ENCODE measurements at regions of chr10 and their contacts with region 1.

Region 1: DNA sequence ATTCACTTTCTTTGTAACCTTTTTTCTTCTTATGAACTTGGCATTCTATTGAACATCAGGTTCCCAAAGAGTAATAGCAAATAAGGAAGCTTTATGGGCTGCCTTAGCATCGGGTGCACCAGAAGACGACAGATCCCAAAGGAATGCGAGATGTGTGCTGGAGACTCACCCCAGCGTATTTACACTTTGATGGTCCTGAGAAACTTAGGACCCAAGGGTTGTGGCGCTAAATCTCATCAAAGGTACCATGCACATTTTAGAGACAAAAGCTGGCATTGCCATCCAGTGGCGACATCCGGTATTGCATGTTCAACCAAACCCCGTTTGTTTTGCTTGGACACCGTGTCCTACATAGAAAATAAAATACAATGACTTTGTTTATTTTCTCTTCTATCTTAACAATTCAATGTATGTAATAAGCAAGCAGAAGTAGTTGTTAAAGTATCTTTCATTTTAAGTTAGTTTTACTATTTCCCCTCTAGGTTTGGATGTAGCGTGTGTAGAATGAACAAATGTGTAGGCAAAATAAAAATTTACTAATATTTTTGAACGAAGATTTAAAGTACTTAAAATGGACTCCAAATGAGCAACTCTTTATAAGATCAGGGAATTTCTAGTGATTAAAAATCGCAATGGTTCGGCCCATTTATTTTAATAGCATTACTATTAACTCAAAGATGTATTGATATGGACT is 1154.8 kb downstream of the GATA3 start:
- DNase-seq: peak; percentile 24 to 56 (median 35)
- ATAC-seq: peak in 1 of 4 donors; percentile 47
- H3K4me3 ChIP-seq: no peak overlapping the region
- H3K27ac ChIP-seq: no peak overlapping the region
- H3K4me1 ChIP-seq: no peaks in the 10 kb centered on the region
- H3K27me3 ChIP-seq: peaks cover 0 to 10% (median 0%) of the 10 kb centered on the region in 9 donors
- CTCF ChIP-seq: peak; percentile 82 to 95 (median 88)
- POLR2A ChIP-seq: no peak

Region 2: GRCh38 chr10:7866176-7866575 is 1343.1 kb before region 1 on chr10:
- intact Hi-C with region 1: loop called in 5 of 10 experiments (anchors 2 to 5 kb)
- DNase-seq: no peak
- ATAC-seq: no peak
- H3K4me3 ChIP-seq: no peak overlapping the region
- H3K27ac ChIP-seq: no peak overlapping the region
- H3K4me1 ChIP-seq: no peaks in the 10 kb centered on the region
- H3K27me3 ChIP-seq: no peaks in the 10 kb centered on the region
- CTCF ChIP-seq: no peak
- POLR2A ChIP-seq: no peak

Region 3: DNA sequence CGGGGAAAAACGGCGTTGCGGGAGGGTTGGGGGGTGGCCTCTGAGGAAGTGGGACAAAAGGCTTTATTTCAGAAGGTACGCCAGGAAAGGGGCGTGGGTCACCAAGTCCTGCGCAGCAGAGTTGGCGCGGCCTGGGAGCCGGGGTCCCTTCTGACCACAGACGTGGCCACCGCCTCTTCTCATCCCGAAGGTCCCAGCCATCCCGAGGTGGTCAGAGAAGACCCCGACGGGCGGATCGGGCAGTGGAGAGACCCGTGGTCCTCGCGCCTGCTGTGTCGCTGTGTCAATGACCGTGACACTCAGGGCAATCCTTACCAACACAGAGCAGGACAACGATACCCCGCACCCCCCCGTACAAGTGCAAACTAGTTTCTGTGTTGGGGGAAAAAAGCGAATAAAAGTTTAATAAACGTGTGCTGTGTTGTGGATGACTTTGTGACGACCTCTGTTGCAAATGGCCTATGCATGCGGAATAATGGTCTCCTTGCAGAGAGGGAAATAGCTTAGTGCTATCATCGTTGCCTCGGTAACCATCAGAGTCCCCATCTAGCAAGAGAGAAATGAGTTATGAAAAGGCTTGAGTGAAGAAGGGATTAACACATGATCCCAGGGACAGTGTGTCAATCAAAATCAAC is 1174.1 kb before region 1 on chr10:
- intact Hi-C with region 1: loop called in 1 of 10 experiments (anchors 10 kb)
- DNase-seq: no peak
- ATAC-seq: no peak
- H3K4me3 ChIP-seq: peak overlapping the region in 6 of 12 donors; percentile 6 to 26 (median 22)
- H3K27ac ChIP-seq: no peak overlapping the region
- H3K4me1 ChIP-seq: peaks cover 0 to 44% (median 16%) of the 10 kb centered on the region in 12 donors
- H3K27me3 ChIP-seq: peaks cover 56 to 100% (median 87%) of the 10 kb centered on the region in 9 donors
- CTCF ChIP-seq: no peak
- POLR2A ChIP-seq: no peak

Region 4: DNA sequence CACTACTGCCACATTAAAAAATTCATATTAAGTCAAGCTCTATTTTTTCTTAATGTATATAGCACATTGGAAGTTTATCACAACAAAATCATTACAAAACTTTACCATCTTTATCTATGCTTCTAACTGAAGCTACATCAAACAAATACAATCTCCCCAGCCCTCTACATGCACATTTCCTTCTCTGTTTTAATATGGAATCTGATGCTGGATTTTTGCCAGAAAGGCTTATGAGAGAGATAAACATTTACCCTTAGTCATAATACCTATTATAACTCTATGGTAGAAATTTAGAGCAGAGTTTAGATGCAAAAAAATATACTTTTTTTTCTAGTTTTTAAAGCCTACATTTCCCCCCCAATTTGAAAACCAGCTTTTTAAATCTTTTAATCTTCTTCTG is 43.9 kb after region 1 on chr10:
- intact Hi-C with region 1: no loop called
- DNase-seq: no peak
- ATAC-seq: no peak
- H3K4me3 ChIP-seq: no peak overlapping the region
- H3K27ac ChIP-seq: no peak overlapping the region
- H3K4me1 ChIP-seq: no peaks in the 10 kb centered on the region
- H3K27me3 ChIP-seq: peaks cover 0 to 6% (median 0%) of the 10 kb centered on the region in 9 donors
- CTCF ChIP-seq: no peak
- POLR2A ChIP-seq: no peak

Region 5: GRCh38 chr10:9853405-9854355 is 644.4 kb after region 1 on chr10:
- intact Hi-C with region 1: no loop called
- DNase-seq: peak in 2 of 5 donors; percentile 9 to 42
- ATAC-seq: peak; percentile 42 to 90 (median 59)
- H3K4me3 ChIP-seq: peak overlapping the region in 1 of 12 donors; percentile 11
- H3K27ac ChIP-seq: no peak overlapping the region
- H3K4me1 ChIP-seq: peaks cover 0 to 8% (median 0%) of the 10 kb centered on the region in 12 donors
- H3K27me3 ChIP-seq: no peaks in the 10 kb centered on the region
- CTCF ChIP-seq: peak in 5 of 12 donors; percentile 9 to 30 (median 27)
- POLR2A ChIP-seq: no peak

Measured in heart left ventricle (tissue), 16 donors.